CD8-positive, alpha-beta T cell (primary cell): ENCODE measurements at regions of chr18 and their contacts with region 1.

Region 1: DNA sequence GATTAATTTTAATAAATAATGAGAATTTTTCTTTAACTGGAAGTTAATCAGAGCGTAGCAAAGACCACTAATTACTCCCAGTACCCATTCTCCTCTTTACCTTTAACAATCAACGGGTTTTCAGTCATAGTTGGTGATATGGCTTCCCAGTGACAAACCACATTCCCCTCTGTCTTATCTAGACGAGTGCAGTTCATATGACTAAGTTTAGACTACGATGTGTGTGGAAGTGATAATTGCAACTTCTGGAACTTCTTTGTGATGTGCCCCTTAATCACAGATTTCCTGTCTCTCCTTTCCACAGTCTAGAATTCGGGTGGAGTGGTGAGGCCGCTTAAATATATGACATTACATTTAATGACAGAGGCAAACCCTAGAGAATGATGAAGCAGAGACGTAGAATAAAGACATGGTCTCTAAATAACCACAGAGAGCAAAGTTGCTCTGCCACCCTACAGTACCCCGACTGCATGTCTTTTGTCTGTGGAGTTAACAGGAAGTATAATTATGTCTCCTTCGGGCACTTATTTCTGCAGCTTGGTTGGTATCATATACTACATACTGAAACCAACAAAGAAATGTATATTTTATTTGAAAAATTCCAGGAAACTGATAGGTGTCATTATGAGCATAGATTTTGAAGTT is 693.3 kb upstream of the CDH7 start:
- DNase-seq: no peak
- ATAC-seq: no peak
- H3K4me3 ChIP-seq: no peak overlapping the region
- H3K4me3 Mint-ChIP-seq: no peak overlapping the region
- H3K27ac ChIP-seq: no peak overlapping the region
- H3K27ac Mint-ChIP-seq: no peak overlapping the region
- H3K4me1 ChIP-seq: no peaks in the 10 kb centered on the region
- H3K4me1 Mint-ChIP-seq: no peaks in the 10 kb centered on the region
- H3K27me3 ChIP-seq: no peaks in the 10 kb centered on the region
- H3K27me3 Mint-ChIP-seq: no peaks in the 10 kb centered on the region
- CTCF ChIP-seq: no peak

Region 2: DNA sequence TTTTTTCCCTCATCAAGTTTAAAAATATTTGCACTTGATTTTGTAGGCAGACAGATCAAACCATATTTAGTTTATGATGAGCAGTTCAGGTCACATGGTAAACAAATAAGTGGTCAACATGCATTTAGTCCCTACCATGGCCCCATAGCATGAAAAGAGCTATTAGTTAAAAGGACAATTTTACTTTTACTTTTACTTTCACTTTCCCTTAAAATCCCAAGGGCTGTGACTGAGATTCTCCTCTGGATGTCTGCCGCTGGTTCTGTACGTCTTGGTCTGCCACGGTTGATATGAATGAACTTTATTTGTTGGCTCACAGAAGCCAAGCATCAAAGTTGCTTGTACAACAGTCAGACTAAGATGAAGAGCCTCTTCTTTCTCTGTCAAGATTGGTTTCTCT is 67.1 kb after region 1 on chr18:
- CTCF ChIA-PET with region 1: no interaction called
- POLR2A ChIA-PET with region 1: no interaction called
- intact Hi-C with region 1: loop called in 1 of 2 experiments (anchors 10 kb)
- DNase-seq: no peak
- ATAC-seq: no peak
- H3K4me3 ChIP-seq: no peak overlapping the region
- H3K4me3 Mint-ChIP-seq: no peak overlapping the region
- H3K27ac ChIP-seq: no peak overlapping the region
- H3K27ac Mint-ChIP-seq: no peak overlapping the region
- H3K4me1 ChIP-seq: no peaks in the 10 kb centered on the region
- H3K4me1 Mint-ChIP-seq: peaks cover 1% of the 10 kb centered on the region
- H3K27me3 ChIP-seq: no peaks in the 10 kb centered on the region
- H3K27me3 Mint-ChIP-seq: no peaks in the 10 kb centered on the region
- CTCF ChIP-seq: no peak

Region 3: GRCh38 chr18:65202094-65202493 is 144.5 kb after region 1 on chr18:
- CTCF ChIA-PET with region 1: no interaction called
- POLR2A ChIA-PET with region 1: no interaction called
- intact Hi-C with region 1: no loop called
- DNase-seq: no peak
- ATAC-seq: no peak
- H3K4me3 ChIP-seq: no peak overlapping the region
- H3K4me3 Mint-ChIP-seq: no peak overlapping the region
- H3K27ac ChIP-seq: no peak overlapping the region
- H3K27ac Mint-ChIP-seq: no peak overlapping the region
- H3K4me1 ChIP-seq: no peaks in the 10 kb centered on the region
- H3K4me1 Mint-ChIP-seq: no peaks in the 10 kb centered on the region
- H3K27me3 ChIP-seq: no peaks in the 10 kb centered on the region
- H3K27me3 Mint-ChIP-seq: no peaks in the 10 kb centered on the region
- CTCF ChIP-seq: no peak

Region 4: DNA sequence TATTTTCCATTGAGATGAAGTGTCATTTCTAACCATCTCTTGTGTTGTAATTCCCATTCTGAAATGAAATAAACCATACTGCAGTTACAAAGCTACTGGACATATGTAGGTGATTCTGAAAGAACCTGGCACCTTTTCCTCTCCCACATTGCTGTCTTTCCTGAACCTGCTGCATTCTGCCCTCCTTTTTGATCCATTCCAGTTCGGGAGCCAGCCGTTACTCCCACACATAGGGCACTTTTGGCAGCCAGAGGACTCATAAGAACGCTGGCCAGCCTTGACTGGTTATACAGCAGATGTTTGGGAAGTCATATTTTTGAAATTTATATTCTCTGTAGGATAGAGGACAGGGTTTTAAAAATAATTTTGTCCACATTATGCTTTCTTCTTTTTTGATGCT is 323.4 kb after region 1 on chr18:
- CTCF ChIA-PET with region 1: no interaction called
- POLR2A ChIA-PET with region 1: no interaction called
- intact Hi-C with region 1: no loop called
- DNase-seq: peak in 1 of 9 experiments; percentile 11
- ATAC-seq: no peak
- H3K4me3 ChIP-seq: no peak overlapping the region
- H3K4me3 Mint-ChIP-seq: no peak overlapping the region
- H3K27ac ChIP-seq: no peak overlapping the region
- H3K27ac Mint-ChIP-seq: no peak overlapping the region
- H3K4me1 ChIP-seq: no peaks in the 10 kb centered on the region
- H3K4me1 Mint-ChIP-seq: no peaks in the 10 kb centered on the region
- H3K27me3 ChIP-seq: no peaks in the 10 kb centered on the region
- H3K27me3 Mint-ChIP-seq: no peaks in the 10 kb centered on the region
- CTCF ChIP-seq: no peak